Endothelial cell of umbilical vein (primary cell): ENCODE measurements at regions of chr19 and their contacts with region 1.

Region 1: GRCh38 chr19:34733826-34734600 is at the start of gene ZNF181:
- DNase-seq: peak; percentile 90
- H3K4me3 ChIP-seq: peak within 1 kb of the TSS; percentile 64 to 82 (median 75)
- H3K27ac ChIP-seq: peak within 1 kb of the TSS; percentile 85
- H3K4me1 ChIP-seq: peaks cover 3% of the 10 kb centered on the region
- H3K27me3 ChIP-seq: no peaks in the 10 kb centered on the region
- CTCF ChIP-seq: no peak
- POLR2A ChIP-seq: peak; percentile 54
- total RNA-seq, gene ZNF181: 5.0 and 5.1 TPM in 2 replicates

Region 2: GRCh38 chr19:34772697-34773554 is 38.9 kb after region 1 on chr19 and contains the start of gene ZNF599:
- CTCF ChIA-PET with region 1: interaction called, 3 read pairs
- POLR2A ChIA-PET with region 1: no interaction called
- dilution Hi-C with region 1: no loop called
- intact Hi-C with region 1: loop called (anchors 1 kb)
- DNase-seq: peak; percentile 91
- H3K4me3 ChIP-seq: peak within 1 kb of the TSS; percentile 64 to 67 (median 66)
- H3K27ac ChIP-seq: peak within 1 kb of the TSS; percentile 2
- H3K4me1 ChIP-seq: peaks cover 7% of the 10 kb centered on the region
- H3K27me3 ChIP-seq: no peaks in the 10 kb centered on the region
- CTCF ChIP-seq: no peak
- POLR2A ChIP-seq: peak; percentile 71
- total RNA-seq, gene ZNF599: 4.5 and 5.0 TPM in 2 replicates

Region 3: DNA sequence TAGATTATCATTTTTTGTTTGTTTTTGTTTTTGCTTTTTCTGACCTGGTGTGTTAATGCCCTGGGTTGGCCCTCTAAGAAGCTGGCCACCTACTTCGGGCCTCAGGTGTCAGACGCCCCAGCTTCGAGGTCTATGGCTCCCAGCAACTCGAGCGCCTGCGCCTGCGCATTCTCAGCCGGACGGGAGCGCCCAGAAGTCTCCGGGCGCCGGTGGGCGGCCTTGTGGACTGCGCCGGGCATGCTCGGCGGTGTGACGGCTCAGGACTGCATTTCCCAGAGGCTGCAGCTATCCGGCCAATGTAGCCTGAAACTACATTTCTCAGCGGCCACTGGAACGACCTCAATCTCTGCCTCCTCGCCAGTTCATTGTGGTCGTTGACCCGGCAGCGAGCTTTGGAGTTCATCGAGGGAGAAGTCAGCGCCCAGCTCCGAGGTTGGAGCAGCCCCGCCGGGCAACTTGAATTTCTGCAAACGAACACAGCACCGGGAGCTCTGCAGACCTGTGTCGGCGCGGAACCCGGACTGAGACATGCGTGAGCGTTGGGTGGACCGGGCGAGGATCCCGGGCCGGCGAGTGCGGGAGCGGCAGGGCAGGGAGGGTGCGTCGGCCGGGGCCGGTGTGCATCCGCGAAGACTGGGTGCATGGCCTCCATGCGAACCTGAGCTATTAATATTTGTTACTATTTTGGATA is 192.8 kb after region 1 on chr19 and contains the start of gene ZNF30:
- CTCF ChIA-PET with region 1: no interaction called
- POLR2A ChIA-PET with region 1: no interaction called
- dilution Hi-C with region 1: no loop called
- intact Hi-C with region 1: loop called (anchors 10 kb)
- DNase-seq: peak; percentile 92
- H3K4me3 ChIP-seq: peak within 1 kb of the TSS; percentile 39 to 82 (median 50)
- H3K27ac ChIP-seq: no peak within 1 kb of the TSS
- H3K4me1 ChIP-seq: peaks cover 9% of the 10 kb centered on the region
- H3K27me3 ChIP-seq: peaks cover 2 to 5% of the 10 kb centered on the region in 2 experiments
- CTCF ChIP-seq: no peak
- POLR2A ChIP-seq: peak; percentile 71
- total RNA-seq, gene ZNF30: 3.6 and 4.7 TPM in 2 replicates